CD4-positive, alpha-beta T cell (primary cell): ENCODE measurements at regions of chr7 and their contacts with region 1.

Region 1: DNA sequence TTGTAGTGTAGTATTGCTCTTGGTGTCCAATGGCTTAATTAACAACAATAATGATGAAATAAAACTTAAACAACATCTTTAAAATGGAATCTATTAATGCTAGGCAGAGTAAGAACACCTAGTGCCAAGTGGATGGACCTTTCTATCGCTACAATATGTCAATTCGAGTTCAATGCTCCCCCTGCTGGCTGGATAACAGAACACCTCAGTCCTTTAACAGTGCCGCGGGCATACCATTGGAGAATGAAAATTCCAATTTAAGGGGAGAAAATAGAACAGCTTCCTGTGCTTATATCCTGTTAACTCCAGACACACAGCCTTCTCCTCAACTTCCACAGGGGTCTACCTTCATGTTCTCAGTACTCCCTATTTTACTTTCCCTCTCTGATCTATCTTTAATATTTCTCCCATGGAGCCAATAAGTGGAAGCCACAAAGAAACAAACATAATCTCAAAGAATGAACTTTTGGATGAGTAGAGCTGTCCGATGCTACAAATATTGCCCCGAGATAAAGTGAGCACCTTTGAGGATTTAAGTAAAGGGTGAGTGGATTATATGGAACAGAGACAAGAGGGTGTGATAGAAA is 41.4 kb downstream of the COL1A2 start:
- DNase-seq: peak in 13 of 14 experiments; percentile 1 to 70 (median 21)
- ATAC-seq: peak; percentile 77
- H3K4me3 ChIP-seq: no peak overlapping the region
- H3K4me3 Mint-ChIP-seq: no peak overlapping the region
- H3K27ac ChIP-seq: no peak overlapping the region
- H3K27ac Mint-ChIP-seq: no peak overlapping the region
- H3K4me1 ChIP-seq: no peaks in the 10 kb centered on the region
- H3K4me1 Mint-ChIP-seq: peaks cover 6% of the 10 kb centered on the region
- H3K27me3 ChIP-seq: peaks cover 0 to 20% of the 10 kb centered on the region in 2 experiments
- H3K27me3 Mint-ChIP-seq: peaks cover 35% of the 10 kb centered on the region
- CTCF ChIP-seq: peak; percentile 76

Region 2: GRCh38 chr7:93178212-93178611 is 1257.9 kb before region 1 on chr7:
- CTCF ChIA-PET with region 1: no interaction called
- POLR2A ChIA-PET with region 1: no interaction called
- intact Hi-C with region 1: loop called (anchors 5 to 10 kb)
- DNase-seq: peak in 2 of 14 experiments; percentile 8 to 20
- ATAC-seq: no peak
- H3K4me3 ChIP-seq: no peak overlapping the region
- H3K4me3 Mint-ChIP-seq: no peak overlapping the region
- H3K27ac ChIP-seq: no peak overlapping the region
- H3K27ac Mint-ChIP-seq: no peak overlapping the region
- H3K4me1 ChIP-seq: no peaks in the 10 kb centered on the region
- H3K4me1 Mint-ChIP-seq: no peaks in the 10 kb centered on the region
- H3K27me3 ChIP-seq: no peaks in the 10 kb centered on the region
- H3K27me3 Mint-ChIP-seq: peaks cover 34% of the 10 kb centered on the region
- CTCF ChIP-seq: peak; percentile 17

Region 3: DNA sequence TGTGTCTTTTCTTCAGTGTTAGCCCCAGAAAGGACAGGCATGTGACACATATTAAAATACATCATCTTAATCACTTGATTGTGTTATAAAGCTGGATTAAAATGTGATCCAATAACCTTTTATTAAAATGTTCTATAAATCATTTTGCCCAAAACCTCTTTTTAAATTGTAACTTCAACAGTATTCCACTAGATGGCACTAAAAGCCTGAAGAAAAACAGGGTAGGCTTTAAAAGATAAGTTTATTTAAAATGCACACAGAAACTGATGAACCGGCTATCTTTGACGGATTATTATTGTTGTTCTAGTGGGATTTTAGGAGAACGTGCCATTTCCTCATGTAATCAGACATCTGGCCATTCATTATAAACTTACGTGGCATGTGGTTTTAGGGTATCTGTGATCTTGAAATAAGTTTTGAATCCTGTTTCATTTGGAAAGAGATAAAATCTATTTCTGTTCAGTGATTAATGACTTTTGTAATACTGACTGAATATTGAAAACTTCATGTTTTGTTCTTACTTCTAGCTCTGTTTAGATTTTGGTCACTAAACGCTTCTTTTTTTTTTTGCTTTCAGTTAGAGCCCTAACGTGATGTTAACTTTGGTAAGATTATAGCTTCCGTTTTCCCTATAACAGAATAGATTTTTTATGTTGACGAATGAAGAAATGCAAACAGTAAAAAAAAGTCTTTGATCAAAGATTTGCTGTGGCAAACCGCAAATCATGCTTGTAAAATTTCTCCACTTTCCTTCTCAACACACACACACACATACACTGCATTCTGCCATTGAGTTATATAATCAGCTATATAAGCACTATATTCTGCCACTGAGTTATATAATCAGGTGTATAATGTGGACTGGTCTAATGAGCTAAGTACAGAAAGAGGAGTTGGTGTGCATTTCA is 1190.3 kb before region 1 on chr7:
- CTCF ChIA-PET with region 1: no interaction called
- POLR2A ChIA-PET with region 1: no interaction called
- intact Hi-C with region 1: loop called in 1 of 2 experiments (anchors 5 kb)
- DNase-seq: peak in 3 of 14 experiments; percentile 48 to 55 (median 51)
- ATAC-seq: peak; percentile 55
- H3K4me3 ChIP-seq: peak overlapping the region; percentile 5
- H3K4me3 Mint-ChIP-seq: peak overlapping the region; percentile 79
- H3K27ac ChIP-seq: no peak overlapping the region
- H3K27ac Mint-ChIP-seq: peak overlapping the region; percentile 40
- H3K4me1 ChIP-seq: no peaks in the 10 kb centered on the region
- H3K4me1 Mint-ChIP-seq: peaks cover 26% of the 10 kb centered on the region
- H3K27me3 ChIP-seq: no peaks in the 10 kb centered on the region
- H3K27me3 Mint-ChIP-seq: no peaks in the 10 kb centered on the region
- CTCF ChIP-seq: peak; percentile 90